ENCODE measurements at regions of chr16 and their contacts with region 1.

Region 1: DNA sequence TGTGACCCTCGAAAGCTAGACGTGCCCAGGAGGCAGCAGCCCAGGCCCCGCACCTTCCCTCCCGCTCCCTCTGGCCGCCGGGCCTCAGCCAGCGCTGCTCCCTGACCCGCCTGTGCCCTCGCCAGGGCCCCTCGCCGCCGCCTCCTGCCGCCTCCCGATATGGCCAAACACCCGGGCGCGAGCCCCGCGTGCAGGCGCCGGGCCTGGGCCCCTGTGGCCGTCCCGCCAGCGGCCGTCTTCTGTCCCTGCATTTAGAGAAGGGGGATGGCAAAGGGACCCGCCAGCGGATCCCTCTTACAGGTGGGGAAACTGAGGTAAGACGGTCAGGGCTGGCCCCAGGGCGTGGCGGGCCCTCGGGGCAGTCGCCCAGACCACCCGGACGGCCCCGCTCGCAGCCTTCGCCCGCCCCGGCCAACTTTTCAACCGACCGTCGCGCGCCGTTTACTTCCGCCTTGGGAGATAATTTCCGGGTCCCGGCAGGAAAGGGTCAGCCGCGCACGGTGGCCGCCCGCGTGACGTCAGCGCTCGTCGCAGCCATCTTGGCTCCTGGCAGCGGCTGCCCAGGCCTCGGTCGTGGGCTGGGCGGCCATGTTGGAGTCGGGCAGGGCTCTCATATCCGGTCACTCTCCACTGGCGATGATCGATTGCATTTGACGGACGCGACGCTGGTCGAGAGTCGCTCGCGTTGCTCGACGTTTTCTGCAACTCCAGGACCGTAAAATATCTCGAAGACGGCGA is 7.0 kb upstream of the GNG13 start:
- DNase-seq: peak; percentile 92 to 96 (median 94)
- H3K4me3 ChIP-seq: peak overlapping the region; percentile 49 to 86 (median 70)
- H3K4me3 Mint-ChIP-seq: peak overlapping the region; percentile 91 to 98
- H3K27ac ChIP-seq: peak overlapping the region; percentile 77 to 95
- H3K27ac Mint-ChIP-seq: peak overlapping the region; percentile 87 to 96 (median 91)
- H3K4me1 ChIP-seq: peaks cover 8 to 12% of the 10 kb centered on the region in 2 donors
- H3K4me1 Mint-ChIP-seq: peaks cover 15% of the 10 kb centered on the region
- H3K27me3 ChIP-seq: peaks cover 0 to 10% of the 10 kb centered on the region in 2 donors
- H3K27me3 Mint-ChIP-seq: peaks cover 14 to 35% (median 18%) of the 10 kb centered on the region in 3 donors
- CTCF ChIP-seq: no peak

Region 2: DNA sequence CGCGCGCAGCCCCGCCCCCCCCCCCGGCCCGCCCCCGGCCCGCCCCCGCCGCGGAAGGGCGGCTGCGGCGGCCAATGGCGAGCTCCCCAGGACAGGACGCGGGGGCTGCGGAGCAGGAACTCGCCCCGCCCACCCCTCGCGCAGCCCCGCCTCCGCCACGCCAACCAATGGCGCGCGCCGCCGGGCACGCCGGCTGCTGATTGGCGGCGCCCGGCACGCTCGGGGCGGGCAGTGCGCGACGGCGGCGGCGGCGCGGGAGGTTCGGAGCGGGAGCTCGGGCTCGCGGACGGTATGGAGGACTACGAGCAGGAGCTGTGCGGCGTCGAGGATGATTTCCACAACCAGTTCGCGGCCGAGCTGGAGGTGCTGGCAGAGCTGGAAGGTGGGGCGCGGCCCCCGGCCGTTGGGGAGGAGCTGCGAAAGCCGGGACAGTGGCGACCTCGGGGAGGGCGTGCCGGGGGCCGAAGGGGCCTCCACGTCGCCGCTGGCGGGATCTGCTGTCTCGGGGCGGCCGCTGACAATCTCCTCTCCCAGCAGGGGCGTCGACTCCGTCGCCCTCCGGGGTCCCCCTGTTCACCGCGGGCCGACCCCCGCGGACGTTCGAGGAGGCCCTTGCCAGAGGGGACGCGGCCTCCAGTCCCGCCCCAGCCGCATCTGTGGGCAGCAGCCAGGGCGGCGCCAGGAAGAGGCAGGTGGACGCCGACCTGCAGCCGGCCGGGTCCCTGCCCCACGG is 19.0 kb before region 1 on chr16 and contains the start of gene CHTF18:
- intact Hi-C with region 1: loop called in 1 of 2 experiments (anchors 2 kb)
- DNase-seq: peak; percentile 88 to 93 (median 92)
- H3K4me3 ChIP-seq: peak within 1 kb of the TSS; percentile 90 to 92 (median 92)
- H3K4me3 Mint-ChIP-seq: peak within 1 kb of the TSS; percentile 81 to 90
- H3K27ac ChIP-seq: peak within 1 kb of the TSS in 1 of 2 donors; percentile 76
- H3K27ac Mint-ChIP-seq: peak within 1 kb of the TSS; percentile 24 to 90 (median 57)
- H3K4me1 ChIP-seq: peaks cover 20 to 32% of the 10 kb centered on the region in 2 donors
- H3K4me1 Mint-ChIP-seq: peaks cover 15% of the 10 kb centered on the region
- H3K27me3 ChIP-seq: no peaks in the 10 kb centered on the region
- H3K27me3 Mint-ChIP-seq: no peaks in the 10 kb centered on the region
- CTCF ChIP-seq: no peak
- polyA plus RNA-seq, gene CHTF18: 0.57 to 13.8 (median 2.2) TPM

Region 3: GRCh38 chr16:970766-971581 is 163.5 kb after region 1 on chr16 and contains the start of gene LMF1:
- intact Hi-C with region 1: loop called in 1 of 2 experiments (anchors 2 kb)
- DNase-seq: peak; percentile 88 to 92 (median 91)
- H3K4me3 ChIP-seq: peak within 1 kb of the TSS; percentile 60 to 90 (median 86)
- H3K4me3 Mint-ChIP-seq: peak within 1 kb of the TSS; percentile 84 to 86
- H3K27ac ChIP-seq: peak within 1 kb of the TSS; percentile 42 to 80
- H3K27ac Mint-ChIP-seq: peak within 1 kb of the TSS in 5 of 7 donors; percentile 18 to 80 (median 50)
- H3K4me1 ChIP-seq: peaks cover 12 to 21% of the 10 kb centered on the region in 2 donors
- H3K4me1 Mint-ChIP-seq: peaks cover 11% of the 10 kb centered on the region
- H3K27me3 ChIP-seq: peaks cover 0 to 15% of the 10 kb centered on the region in 2 donors
- H3K27me3 Mint-ChIP-seq: peaks cover 9 to 25% (median 10%) of the 10 kb centered on the region in 3 donors
- CTCF ChIP-seq: no peak
- polyA plus RNA-seq, gene LMF1: 5.9 to 14.7 (median 10.6) TPM